Vagina (tissue), 2 donors: ENCODE measurements at regions of chr1 and their contacts with region 1.

Region 1: GRCh38 chr1:5745776-5746610 is 246.2 kb downstream of the NPHP4 start:
- DNase-seq: no peak
- H3K4me3 ChIP-seq: no peak overlapping the region
- H3K27ac ChIP-seq: no peak overlapping the region
- H3K4me1 ChIP-seq: peaks cover 14% of the 10 kb centered on the region
- H3K27me3 ChIP-seq: no peaks in the 10 kb centered on the region
- CTCF ChIP-seq: peak; percentile 74 to 80 (median 77)
- POLR2A ChIP-seq: no peak

Region 2: DNA sequence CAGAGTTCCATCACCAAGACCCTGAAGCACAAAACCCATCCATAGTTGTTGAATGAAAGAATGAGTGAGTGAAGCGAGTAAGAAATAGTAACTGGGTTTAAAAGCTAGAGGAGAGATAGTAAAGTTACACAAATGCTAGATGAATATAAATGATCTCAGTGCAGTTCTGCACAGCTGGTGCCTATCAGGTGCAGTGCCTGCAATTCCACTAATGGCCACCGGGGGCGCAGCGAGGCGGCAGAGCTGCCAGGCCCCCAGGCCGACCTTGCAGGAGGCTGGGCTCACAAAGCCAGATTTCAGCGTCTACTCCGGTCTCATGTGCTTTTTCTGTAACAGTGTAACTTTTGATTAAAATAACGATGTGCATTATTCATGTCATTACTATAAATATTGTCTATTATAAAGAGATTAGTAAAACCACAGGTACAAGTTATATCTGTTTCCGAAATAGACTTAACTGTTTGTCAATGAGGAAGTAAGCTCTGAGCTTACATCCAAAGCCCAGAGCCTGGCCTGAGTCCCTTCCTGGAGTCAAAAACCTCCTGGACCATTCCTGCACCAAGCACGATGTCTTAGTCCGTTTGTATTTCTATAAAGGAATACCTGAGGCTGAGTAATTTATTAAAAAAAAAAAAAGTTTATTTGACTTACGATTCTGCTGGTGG is 231.3 kb before region 1 on chr1:
- intact Hi-C with region 1: loop called (anchors 10 kb)
- DNase-seq: no peak
- H3K4me3 ChIP-seq: no peak overlapping the region
- H3K27ac ChIP-seq: no peak overlapping the region
- H3K4me1 ChIP-seq: peaks cover 5% of the 10 kb centered on the region
- H3K27me3 ChIP-seq: no peaks in the 10 kb centered on the region
- CTCF ChIP-seq: peak; percentile 88 to 97 (median 92)
- POLR2A ChIP-seq: no peak

Region 3: GRCh38 chr1:6007318-6008083 is 261.5 kb after region 1 on chr1:
- intact Hi-C with region 1: no loop called
- DNase-seq: no peak
- H3K4me3 ChIP-seq: no peak overlapping the region
- H3K27ac ChIP-seq: no peak overlapping the region
- H3K4me1 ChIP-seq: no peaks in the 10 kb centered on the region
- H3K27me3 ChIP-seq: no peaks in the 10 kb centered on the region
- CTCF ChIP-seq: no peak
- POLR2A ChIP-seq: no peak

Region 4: DNA sequence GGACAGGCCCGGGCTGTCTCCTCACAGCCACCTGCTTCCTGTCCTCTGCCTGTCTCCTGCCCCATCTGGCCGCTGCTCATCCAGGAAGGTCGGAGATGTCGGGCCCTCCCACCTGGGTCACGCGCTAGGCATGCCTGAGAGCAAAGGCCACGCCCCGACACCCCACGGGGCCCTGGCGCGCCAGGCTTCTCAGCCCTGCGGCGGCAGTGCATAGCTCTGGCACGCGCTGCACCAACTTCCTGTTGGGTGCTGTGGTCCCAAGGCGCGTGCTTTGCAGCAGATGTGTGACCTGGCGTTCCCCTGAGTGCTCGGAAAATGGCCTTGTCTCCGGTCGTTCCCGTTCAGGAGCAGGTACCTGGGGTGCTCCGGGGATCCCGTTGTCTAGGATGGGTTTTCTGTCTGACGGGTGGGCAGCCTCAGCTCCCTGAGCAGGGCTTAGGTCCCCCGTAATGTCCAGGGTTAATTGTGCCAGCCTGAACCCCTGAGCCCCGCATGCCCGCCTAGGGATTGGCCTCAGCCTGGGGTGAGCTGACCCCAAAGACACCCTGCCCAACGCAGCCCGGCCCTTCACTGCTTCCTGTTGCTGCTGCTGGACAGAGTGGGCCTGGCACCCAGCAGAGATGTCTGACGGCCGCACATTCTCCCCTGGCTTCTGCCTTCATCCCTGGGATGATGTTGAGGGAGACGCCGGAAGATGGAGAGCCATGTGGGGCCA is 280.3 kb after region 1 on chr1:
- intact Hi-C with region 1: no loop called
- DNase-seq: no peak
- H3K4me3 ChIP-seq: peak overlapping the region; percentile 26 to 33
- H3K27ac ChIP-seq: no peak overlapping the region
- H3K4me1 ChIP-seq: peaks cover 14% of the 10 kb centered on the region
- H3K27me3 ChIP-seq: no peaks in the 10 kb centered on the region
- CTCF ChIP-seq: no peak
- POLR2A ChIP-seq: no peak

Region 5: GRCh38 chr1:6041432-6042062 is 295.6 kb after region 1 on chr1:
- intact Hi-C with region 1: no loop called
- DNase-seq: no peak
- H3K4me3 ChIP-seq: no peak overlapping the region
- H3K27ac ChIP-seq: no peak overlapping the region
- H3K4me1 ChIP-seq: no peaks in the 10 kb centered on the region
- H3K27me3 ChIP-seq: no peaks in the 10 kb centered on the region
- CTCF ChIP-seq: peak in 1 of 3 experiments; percentile 21
- POLR2A ChIP-seq: no peak